Sigmoid colon (tissue), 7 donors: ENCODE measurements at regions of chr3 and their contacts with region 1.

Region 1: DNA sequence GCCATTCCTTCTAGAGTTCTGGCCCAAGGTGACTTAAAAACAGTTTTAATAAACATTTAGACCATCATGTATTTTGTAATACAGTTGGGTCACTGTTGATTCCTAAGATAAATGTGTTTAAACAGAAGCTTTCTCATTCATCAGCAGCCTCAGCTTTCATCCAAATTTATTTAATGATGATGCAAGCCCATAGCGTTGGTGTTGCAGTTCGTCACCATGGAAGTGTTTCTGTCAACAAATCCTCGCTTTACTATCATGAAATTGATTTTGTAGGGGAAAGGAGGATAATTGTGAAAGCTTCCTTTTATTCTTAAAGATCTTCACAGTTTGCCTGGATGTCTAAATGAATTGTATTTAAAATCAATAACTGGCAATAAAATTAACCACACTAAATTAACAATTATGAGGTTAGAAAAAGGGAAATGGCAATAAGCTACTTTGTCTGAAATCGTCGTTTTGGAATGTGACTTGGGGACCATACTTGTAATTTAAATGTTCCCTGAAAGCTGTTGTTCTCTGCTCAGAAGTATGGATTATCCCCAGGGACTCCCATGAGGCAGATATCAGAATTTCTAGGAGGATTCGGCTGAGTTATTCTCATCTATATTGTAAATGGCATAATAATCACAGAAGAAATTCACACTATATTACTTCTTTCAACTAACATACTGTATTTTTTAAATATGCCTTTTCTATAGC is 28.9 kb downstream of the CMSS1 start:
- DNase-seq: peak; percentile 79
- H3K4me3 ChIP-seq: no peak overlapping the region
- H3K27ac ChIP-seq: peak overlapping the region; percentile 70 to 95 (median 88)
- H3K4me1 ChIP-seq: peaks cover 0 to 84% (median 62%) of the 10 kb centered on the region in 4 donors
- H3K27me3 ChIP-seq: no peaks in the 10 kb centered on the region
- CTCF ChIP-seq: no peak
- EP300 ChIP-seq: peak in 3 of 4 donors; percentile 18 to 53 (median 49)
- POLR2A ChIP-seq: no peak

Region 2: DNA sequence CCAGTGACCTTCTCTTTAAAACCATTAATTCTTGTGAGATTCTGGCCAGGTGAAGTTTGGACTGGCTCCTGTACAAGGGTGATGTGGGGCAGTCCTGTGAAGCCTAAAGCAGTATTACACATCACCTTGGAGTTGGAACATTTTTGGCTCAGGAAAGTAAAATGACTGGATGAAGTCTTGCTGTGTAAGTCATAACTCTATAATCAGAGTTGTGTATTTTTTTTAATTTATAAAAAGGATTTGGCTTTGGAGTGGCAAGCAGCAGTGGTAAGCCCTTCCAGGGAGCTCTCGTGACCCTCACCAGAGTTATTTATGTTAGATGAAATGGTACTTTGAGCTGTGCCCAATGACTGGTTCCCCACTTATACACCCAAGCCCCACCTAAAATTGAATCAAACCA is 613.9 kb before region 1 on chr3:
- intact Hi-C with region 1: no loop called
- DNase-seq: no peak
- H3K4me3 ChIP-seq: no peak overlapping the region
- H3K27ac ChIP-seq: no peak overlapping the region
- H3K4me1 ChIP-seq: no peaks in the 10 kb centered on the region
- H3K27me3 ChIP-seq: no peaks in the 10 kb centered on the region
- CTCF ChIP-seq: no peak
- EP300 ChIP-seq: no peak
- POLR2A ChIP-seq: no peak

Region 3: GRCh38 chr3:99731499-99731898 is 115.1 kb before region 1 on chr3:
- intact Hi-C with region 1: no loop called
- DNase-seq: no peak
- H3K4me3 ChIP-seq: no peak overlapping the region
- H3K27ac ChIP-seq: no peak overlapping the region
- H3K4me1 ChIP-seq: peaks cover 0 to 13% (median 0%) of the 10 kb centered on the region in 4 donors
- H3K27me3 ChIP-seq: no peaks in the 10 kb centered on the region
- CTCF ChIP-seq: no peak
- EP300 ChIP-seq: no peak
- POLR2A ChIP-seq: no peak

Region 4: DNA sequence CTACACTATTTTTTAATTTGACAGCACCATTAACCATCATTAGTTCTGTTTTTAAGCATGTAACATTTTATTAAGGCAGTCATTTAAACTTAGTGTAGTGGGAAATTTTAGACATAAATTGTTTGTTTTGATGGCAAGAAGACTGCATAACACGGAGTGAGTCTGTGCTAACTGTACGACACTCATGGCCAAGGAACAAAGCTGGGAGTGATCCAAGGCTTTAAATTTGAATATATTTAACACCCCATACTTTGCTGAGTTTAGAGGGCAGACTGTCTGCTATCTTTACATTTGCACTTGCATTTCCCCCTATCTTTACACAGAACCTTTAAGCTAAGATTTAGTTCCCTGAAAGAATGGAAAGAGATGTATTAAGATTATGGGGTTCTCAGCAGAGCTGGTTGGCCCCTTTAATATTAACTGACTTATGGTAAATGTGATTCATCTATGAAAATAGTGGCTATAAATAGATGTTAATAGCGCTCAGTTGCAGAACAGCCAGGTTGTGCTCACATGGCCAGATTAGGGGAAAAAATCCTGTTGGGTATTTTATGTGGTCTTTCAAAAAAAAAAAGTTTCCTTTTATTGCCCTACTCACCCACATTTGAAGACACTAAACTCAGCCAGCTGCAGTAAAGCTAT is 91.8 kb after region 1 on chr3:
- intact Hi-C with region 1: loop called (anchors 5 kb)
- DNase-seq: no peak
- H3K4me3 ChIP-seq: no peak overlapping the region
- H3K27ac ChIP-seq: peak overlapping the region; percentile 40 to 84 (median 68)
- H3K4me1 ChIP-seq: peaks cover 0 to 64% (median 46%) of the 10 kb centered on the region in 4 donors
- H3K27me3 ChIP-seq: no peaks in the 10 kb centered on the region
- CTCF ChIP-seq: no peak
- EP300 ChIP-seq: no peak
- POLR2A ChIP-seq: no peak